PC-3 (cell line): ENCODE measurements at regions of chr4 and their contacts with region 1.

Region 1: GRCh38 chr4:8403173-8403753 is 37.3 kb downstream of the ACOX3 start:
- DNase-seq: peak; percentile 80
- ATAC-seq: peak; percentile 83
- H3K4me3 ChIP-seq: no peak overlapping the region
- H3K27ac ChIP-seq: no peak overlapping the region
- H3K4me1 ChIP-seq: no peaks in the 10 kb centered on the region
- H3K27me3 ChIP-seq: no peaks in the 10 kb centered on the region
- CTCF ChIP-seq: peak; percentile 90

Region 2: DNA sequence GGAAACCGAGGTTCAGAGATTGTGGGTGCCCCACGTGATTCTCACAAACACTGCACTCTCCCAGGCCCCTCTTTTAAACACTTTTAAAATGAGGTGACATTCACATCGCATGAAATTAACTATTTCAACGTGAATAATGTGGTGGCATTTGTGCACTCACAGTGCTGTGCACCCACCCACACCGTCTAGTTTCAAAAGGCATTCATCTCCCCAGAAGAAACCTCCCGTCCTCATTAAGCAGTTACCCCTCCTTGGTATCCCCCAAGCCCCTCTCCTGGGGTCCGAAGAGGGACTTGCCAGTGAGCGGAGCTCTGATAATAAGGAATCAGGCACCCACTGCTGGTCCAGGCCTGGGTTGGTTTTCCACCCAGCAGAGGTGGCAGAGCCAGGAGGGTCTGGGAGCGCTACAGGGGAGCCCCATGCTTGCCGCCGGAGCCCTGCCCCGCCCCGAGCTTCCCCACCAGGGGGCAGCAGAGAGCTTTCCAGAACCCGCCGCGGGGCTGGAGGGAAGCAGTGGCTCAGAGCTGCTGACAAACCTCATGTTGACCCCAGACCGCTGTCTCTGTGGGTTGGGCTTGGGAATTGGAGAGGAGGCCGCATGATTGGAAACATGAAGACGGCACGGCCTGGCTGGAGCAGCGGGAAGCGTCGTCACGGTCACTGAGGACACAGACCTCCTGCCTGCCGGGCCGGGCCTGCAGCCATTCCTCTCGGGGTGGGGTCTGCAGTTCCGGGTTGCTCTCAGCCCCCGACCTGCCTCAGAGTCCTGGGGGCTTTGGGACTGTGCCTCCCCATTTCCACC is 161.2 kb before region 1 on chr4:
- CTCF ChIA-PET with region 1: no interaction called
- POLR2A ChIA-PET with region 1: no interaction called
- intact Hi-C with region 1: loop called (anchors 1 kb)
- DNase-seq: peak; percentile 75
- ATAC-seq: peak; percentile 93
- H3K4me3 ChIP-seq: no peak overlapping the region
- H3K27ac ChIP-seq: no peak overlapping the region
- H3K4me1 ChIP-seq: peaks cover 8% of the 10 kb centered on the region
- H3K27me3 ChIP-seq: no peaks in the 10 kb centered on the region
- CTCF ChIP-seq: peak; percentile 89

Region 3: DNA sequence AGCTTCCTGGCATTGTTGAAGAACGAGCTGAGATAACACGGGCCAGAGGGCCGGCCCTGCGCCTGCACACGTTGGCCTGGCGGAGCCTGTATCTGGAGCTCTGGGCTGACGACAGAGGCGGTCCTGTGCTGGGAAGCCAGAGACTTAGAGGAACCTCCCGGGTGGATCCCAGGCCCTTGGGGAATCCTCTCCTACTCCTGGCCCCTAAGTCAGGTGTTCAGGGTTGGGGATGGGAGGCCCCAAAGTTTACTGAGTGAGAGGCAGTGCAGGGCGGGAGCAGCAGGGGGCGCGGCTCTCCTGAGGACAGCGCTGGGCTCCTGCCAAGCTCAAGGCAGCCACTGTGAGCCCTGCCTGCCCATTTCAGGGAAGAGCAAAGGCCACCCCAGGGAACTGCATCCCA is 136.2 kb before region 1 on chr4:
- CTCF ChIA-PET with region 1: no interaction called
- POLR2A ChIA-PET with region 1: no interaction called
- intact Hi-C with region 1: loop called (anchors 1 kb)
- DNase-seq: peak; percentile 68
- ATAC-seq: peak; percentile 68
- H3K4me3 ChIP-seq: no peak overlapping the region
- H3K27ac ChIP-seq: no peak overlapping the region
- H3K4me1 ChIP-seq: no peaks in the 10 kb centered on the region
- H3K27me3 ChIP-seq: no peaks in the 10 kb centered on the region
- CTCF ChIP-seq: peak; percentile 72

Region 4: GRCh38 chr4:8370935-8371595 is 32.2 kb before region 1 on chr4:
- CTCF ChIA-PET with region 1: no interaction called
- POLR2A ChIA-PET with region 1: no interaction called
- intact Hi-C with region 1: no loop called
- DNase-seq: no peak
- ATAC-seq: no peak
- H3K4me3 ChIP-seq: no peak overlapping the region
- H3K27ac ChIP-seq: no peak overlapping the region
- H3K4me1 ChIP-seq: no peaks in the 10 kb centered on the region
- H3K27me3 ChIP-seq: no peaks in the 10 kb centered on the region
- CTCF ChIP-seq: no peak